ENCODE measurements at regions of chr2 and their contacts with region 1.

Region 1: DNA sequence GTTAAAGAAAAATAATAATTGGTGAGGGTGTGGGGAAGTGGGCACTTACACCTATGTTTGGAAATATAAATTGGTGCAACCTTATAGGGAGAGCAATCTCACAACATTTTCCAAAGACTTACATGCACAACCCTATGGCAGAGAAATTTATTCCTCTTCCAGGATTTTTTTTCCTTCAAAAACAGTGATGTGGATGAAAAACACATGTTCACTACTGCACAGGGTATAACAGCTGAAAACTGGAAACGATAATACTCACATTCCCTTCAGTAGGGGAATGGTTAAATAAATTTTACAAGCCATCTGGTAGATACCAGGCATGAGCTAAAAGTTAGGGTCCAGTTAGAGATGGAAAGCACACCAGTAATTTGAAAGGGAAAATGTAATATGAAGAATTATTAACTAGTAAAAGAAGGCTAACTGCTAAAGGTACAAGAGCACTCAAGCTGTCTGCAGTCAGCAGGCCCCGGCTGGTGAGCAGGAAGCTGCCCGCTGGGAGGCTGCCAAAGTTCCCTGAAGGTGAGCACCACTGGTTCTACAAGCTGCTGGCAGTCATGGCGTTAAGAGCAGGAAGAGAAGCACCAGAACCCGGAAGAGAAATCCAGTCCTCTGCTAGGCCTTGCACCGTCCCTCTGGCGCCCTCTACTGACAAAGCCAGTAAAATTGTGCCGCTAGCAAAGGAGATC is 28.4 kb upstream of the CASP8 start:
- DNase-seq: peak; percentile 94
- H3K4me3 ChIP-seq: peak overlapping the region in 2 of 8 donors; percentile 56 to 83
- H3K27ac ChIP-seq: peak overlapping the region in 7 of 8 donors; percentile 16 to 92 (median 89)
- H3K4me1 ChIP-seq: peaks cover 30 to 68% (median 53%) of the 10 kb centered on the region in 6 donors
- H3K27me3 ChIP-seq: no peaks in the 10 kb centered on the region
- CTCF ChIP-seq: peak; percentile 79 to 95 (median 89)
- POLR2A ChIP-seq: no peak

Region 2: GRCh38 chr2:201182650-201183364 is 49.1 kb before region 1 on chr2 and contains the start of gene CASP10:
- intact Hi-C with region 1: loop called (anchors 2 kb)
- DNase-seq: no peak
- H3K4me3 ChIP-seq: peak within 1 kb of the TSS; percentile 43 to 65 (median 53)
- H3K27ac ChIP-seq: peak within 1 kb of the TSS; percentile 1 to 86 (median 85)
- H3K4me1 ChIP-seq: peaks cover 5 to 75% (median 52%) of the 10 kb centered on the region in 6 donors
- H3K27me3 ChIP-seq: no peaks in the 10 kb centered on the region
- CTCF ChIP-seq: peak; percentile 38 to 81 (median 65)
- POLR2A ChIP-seq: peak in 1 of 3 donors; percentile 67
- total RNA-seq, gene CASP10: 42.5 to 75.6 (median 55.3) TPM

Region 3: GRCh38 chr2:201327678-201328077 is 95.8 kb after region 1 on chr2:
- intact Hi-C with region 1: no loop called
- DNase-seq: no peak
- H3K4me3 ChIP-seq: no peak overlapping the region
- H3K27ac ChIP-seq: no peak overlapping the region
- H3K4me1 ChIP-seq: no peaks in the 10 kb centered on the region
- H3K27me3 ChIP-seq: no peaks in the 10 kb centered on the region
- CTCF ChIP-seq: no peak
- POLR2A ChIP-seq: no peak